ENCODE measurements at regions of chr6 and their contacts with region 1.

Region 1: GRCh38 chr6:131532580-131533039 is 40.4 kb upstream of the ARG1 start:
- DNase-seq: no peak
- ATAC-seq: no peak
- H3K4me3 ChIP-seq: no peak overlapping the region
- H3K27ac ChIP-seq: no peak overlapping the region
- H3K4me1 ChIP-seq: no peaks in the 10 kb centered on the region
- H3K27me3 ChIP-seq: no peaks in the 10 kb centered on the region
- CTCF ChIP-seq: no peak

Region 2: GRCh38 chr6:130825772-130826441 is 706.7 kb before region 1 on chr6:
- CTCF ChIA-PET with region 1: no interaction called
- POLR2A ChIA-PET with region 1: no interaction called
- in situ Hi-C with region 1: no loop called
- intact Hi-C with region 1: no loop called
- DNase-seq: no peak
- ATAC-seq: no peak
- H3K4me3 ChIP-seq: no peak overlapping the region
- H3K27ac ChIP-seq: no peak overlapping the region
- H3K4me1 ChIP-seq: no peaks in the 10 kb centered on the region
- H3K27me3 ChIP-seq: no peaks in the 10 kb centered on the region
- CTCF ChIP-seq: no peak

Region 3: DNA sequence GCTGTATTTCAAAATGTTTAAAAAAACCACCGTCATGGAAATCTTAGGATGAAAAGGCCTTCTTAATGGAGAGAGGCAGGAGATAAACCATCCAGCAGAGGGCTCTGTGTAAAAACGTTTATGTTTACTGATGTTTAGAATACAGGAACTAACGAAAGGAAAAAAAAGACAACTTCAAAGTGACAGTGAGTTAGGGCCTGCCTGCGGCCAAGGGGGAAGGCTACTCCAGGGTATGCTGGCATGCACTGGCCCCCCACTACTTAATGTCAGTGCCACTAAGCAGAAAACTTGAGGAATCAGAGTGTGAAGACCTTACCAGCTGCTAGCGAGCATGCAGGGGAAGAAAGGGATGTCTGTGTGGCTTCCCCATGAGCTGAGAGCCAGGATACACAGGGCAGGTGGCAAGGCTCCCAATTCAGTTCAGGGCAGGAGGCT is 349.6 kb before region 1 on chr6:
- CTCF ChIA-PET with region 1: no interaction called
- POLR2A ChIA-PET with region 1: no interaction called
- in situ Hi-C with region 1: no loop called
- intact Hi-C with region 1: loop called (anchors 5 kb)
- DNase-seq: no peak
- ATAC-seq: peak; percentile 66
- H3K4me3 ChIP-seq: no peak overlapping the region
- H3K27ac ChIP-seq: no peak overlapping the region
- H3K4me1 ChIP-seq: no peaks in the 10 kb centered on the region
- H3K27me3 ChIP-seq: no peaks in the 10 kb centered on the region
- CTCF ChIP-seq: peak; percentile 67

Region 4: DNA sequence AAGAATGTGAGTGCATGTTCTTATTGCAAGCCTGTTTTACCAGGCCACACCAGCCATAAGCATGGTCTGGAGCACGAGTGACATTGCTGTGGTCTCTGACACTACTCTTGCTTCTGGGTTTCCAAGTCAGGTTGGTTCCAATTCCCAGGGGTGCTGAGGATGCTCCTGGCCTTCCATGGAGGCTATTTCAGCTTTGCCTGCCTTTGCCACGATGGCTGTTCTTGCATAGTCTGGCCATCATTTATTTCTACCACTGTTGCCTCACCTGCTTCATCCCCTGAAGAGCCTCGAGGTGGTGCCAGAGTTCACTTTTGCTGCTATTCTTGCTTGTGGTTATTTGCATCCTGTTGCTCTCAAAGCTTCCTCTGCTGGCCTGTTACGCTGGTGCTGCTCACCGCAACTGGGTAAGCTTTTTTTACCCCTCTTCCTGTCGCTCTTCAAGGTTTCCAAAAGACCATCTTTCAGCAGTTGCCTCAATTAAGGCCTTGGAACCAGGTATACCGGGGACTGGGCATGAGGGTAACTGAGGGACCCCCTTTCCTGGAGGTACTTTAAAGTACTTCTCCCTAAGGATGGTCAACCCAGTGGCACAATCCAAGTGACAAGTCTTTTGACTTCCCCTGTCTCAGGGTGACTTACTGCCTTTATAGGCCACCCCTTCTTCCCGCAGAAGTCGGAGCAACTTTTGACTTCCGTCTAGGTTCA is 332.9 kb before region 1 on chr6:
- CTCF ChIA-PET with region 1: no interaction called
- POLR2A ChIA-PET with region 1: no interaction called
- in situ Hi-C with region 1: no loop called
- intact Hi-C with region 1: loop called (anchors 1 kb)
- DNase-seq: peak; percentile 24
- ATAC-seq: peak; percentile 88
- H3K4me3 ChIP-seq: no peak overlapping the region
- H3K27ac ChIP-seq: no peak overlapping the region
- H3K4me1 ChIP-seq: no peaks in the 10 kb centered on the region
- H3K27me3 ChIP-seq: no peaks in the 10 kb centered on the region
- CTCF ChIP-seq: peak; percentile 73

Measured in Panc1 (cell line).